G401 (cell line): ENCODE measurements at regions of chr15 and their contacts with region 1.

Region 1: DNA sequence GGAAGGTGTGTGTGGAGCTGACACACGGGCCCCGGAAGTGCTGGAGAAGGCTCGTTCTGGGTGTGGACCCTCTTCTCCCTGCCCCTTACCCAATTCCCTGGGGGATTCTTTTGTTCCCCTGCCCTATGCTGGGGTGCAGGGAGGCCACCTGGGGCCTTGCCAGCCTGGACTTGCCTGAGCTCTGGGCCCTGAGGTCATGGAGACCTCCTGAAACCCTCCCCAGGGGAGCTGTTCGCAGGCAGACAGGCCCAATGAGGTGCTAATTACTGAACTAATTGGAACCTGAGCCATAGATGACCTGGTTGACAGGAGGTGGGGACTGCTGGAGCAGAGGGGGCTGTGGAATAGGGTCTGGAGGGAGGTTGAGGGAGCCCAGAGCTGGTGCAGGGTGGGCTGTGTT is 9.4 kb upstream of the C15orf39 start:
- DNase-seq: no peak

Region 2: GRCh38 chr15:75126001-75126400 is 66.3 kb before region 1 on chr15:
- in situ Hi-C with region 1: loop called (anchors 5 kb)
- DNase-seq: no peak